ENCODE measurements at regions of chr2 and their contacts with region 1.

Region 1: DNA sequence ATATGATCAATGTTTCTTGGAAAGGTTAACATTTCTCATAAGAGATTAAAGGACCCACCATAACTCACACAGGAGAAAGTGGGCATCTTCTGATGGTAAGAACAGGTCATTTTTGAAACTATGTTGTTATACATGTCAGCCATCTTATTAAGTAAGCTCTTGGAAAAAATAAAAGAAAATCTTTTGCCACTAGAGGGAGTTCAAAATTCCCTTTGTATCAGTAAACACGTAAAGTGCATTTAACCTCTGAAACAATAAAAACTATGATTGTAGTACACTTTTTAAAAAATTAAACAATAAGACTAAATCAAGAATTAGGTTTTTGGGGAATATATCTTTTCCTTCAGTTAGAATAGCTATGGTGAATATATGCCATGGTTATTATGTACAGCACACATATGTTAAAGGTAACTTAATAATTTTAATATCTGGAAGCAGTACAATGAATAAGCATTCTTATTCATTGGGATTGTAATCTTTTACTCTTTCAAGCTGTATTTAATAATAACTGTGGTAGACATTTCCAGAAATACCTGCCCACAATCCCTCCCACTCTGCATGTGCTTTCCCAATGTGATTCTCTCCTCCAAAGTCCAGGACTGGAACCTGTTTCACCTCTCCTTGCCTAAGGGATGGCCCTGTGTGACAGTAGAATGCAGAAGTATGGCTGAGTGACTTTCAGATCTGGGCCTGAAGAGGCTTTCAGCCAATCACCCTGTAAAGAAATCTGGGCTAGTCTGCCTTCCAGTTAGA is 64.2 kb downstream of the RBMS1 start:
- DNase-seq: peak; percentile 62
- H3K4me3 Mint-ChIP-seq: no peak overlapping the region
- H3K27ac Mint-ChIP-seq: peak overlapping the region; percentile 93
- H3K4me1 Mint-ChIP-seq: peaks cover 24% of the 10 kb centered on the region
- H3K27me3 Mint-ChIP-seq: no peaks in the 10 kb centered on the region
- CTCF ChIP-seq: peak; percentile 32

Region 2: GRCh38 chr2:160028431-160029269 is 400.8 kb before region 1 on chr2:
- CTCF ChIA-PET with region 1: no interaction called
- POLR2A ChIA-PET with region 1: no interaction called
- intact Hi-C with region 1: no loop called
- DNase-seq: peak; percentile 14
- H3K4me3 Mint-ChIP-seq: no peak overlapping the region
- H3K27ac Mint-ChIP-seq: no peak overlapping the region
- H3K4me1 Mint-ChIP-seq: peaks cover 23% of the 10 kb centered on the region
- H3K27me3 Mint-ChIP-seq: no peaks in the 10 kb centered on the region
- CTCF ChIP-seq: no peak

Region 3: GRCh38 chr2:160282063-160282580 is 147.3 kb before region 1 on chr2:
- CTCF ChIA-PET with region 1: no interaction called
- POLR2A ChIA-PET with region 1: no interaction called
- intact Hi-C with region 1: no loop called
- DNase-seq: no peak
- H3K4me3 Mint-ChIP-seq: no peak overlapping the region
- H3K27ac Mint-ChIP-seq: no peak overlapping the region
- H3K4me1 Mint-ChIP-seq: peaks cover 15% of the 10 kb centered on the region
- H3K27me3 Mint-ChIP-seq: no peaks in the 10 kb centered on the region
- CTCF ChIP-seq: no peak

Region 4: DNA sequence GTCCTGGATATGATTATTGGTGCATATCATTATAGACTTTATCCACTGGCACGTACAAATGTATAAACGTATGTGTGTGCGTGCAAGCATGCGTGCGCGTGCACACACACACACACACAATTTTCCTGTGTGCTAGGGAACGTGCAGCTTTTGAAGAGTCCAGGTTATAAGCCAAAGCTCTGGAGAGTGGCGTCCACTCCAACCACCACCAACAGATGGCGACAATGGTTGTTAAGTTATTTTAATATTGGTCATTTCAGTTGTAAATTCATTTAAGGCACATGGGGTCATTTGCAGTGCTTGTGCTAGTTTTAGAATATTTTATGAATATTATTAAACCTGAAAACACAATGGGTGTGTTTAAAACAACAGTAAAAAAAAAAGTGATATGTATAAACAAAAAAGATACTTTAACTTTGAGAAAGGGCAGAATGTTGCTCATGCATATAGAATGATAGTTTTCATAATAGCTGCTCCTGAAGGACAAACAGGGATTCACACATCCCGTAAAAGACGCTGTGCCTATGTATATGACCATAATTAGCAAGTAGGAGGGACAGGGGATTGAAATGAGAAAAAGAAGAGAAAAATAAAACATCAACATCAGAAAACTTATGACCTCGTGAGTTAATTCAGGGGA is 105.1 kb before region 1 on chr2:
- CTCF ChIA-PET with region 1: interaction called, 46 read pairs
- POLR2A ChIA-PET with region 1: interaction called, 3 read pairs
- intact Hi-C with region 1: loop called (anchors 1 kb)
- DNase-seq: peak; percentile 66
- H3K4me3 Mint-ChIP-seq: no peak overlapping the region
- H3K27ac Mint-ChIP-seq: peak overlapping the region; percentile 36
- H3K4me1 Mint-ChIP-seq: peaks cover 30% of the 10 kb centered on the region
- H3K27me3 Mint-ChIP-seq: no peaks in the 10 kb centered on the region
- CTCF ChIP-seq: peak; percentile 71

Region 5: GRCh38 chr2:160406591-160407392 is 22.6 kb before region 1 on chr2:
- CTCF ChIA-PET with region 1: interaction called, 6 read pairs
- POLR2A ChIA-PET with region 1: interaction called, 38 read pairs
- intact Hi-C with region 1: no loop called
- DNase-seq: peak; percentile 73
- H3K4me3 Mint-ChIP-seq: peak overlapping the region; percentile 92
- H3K27ac Mint-ChIP-seq: peak overlapping the region; percentile 85
- H3K4me1 Mint-ChIP-seq: peaks cover 39% of the 10 kb centered on the region
- H3K27me3 Mint-ChIP-seq: no peaks in the 10 kb centered on the region
- CTCF ChIP-seq: no peak

Region 6: GRCh38 chr2:160493227-160494028 is 64.0 kb after region 1 on chr2 and contains the start of gene RBMS1:
- CTCF ChIA-PET with region 1: interaction called, 3 read pairs
- POLR2A ChIA-PET with region 1: no interaction called
- intact Hi-C with region 1: loop called (anchors 1 kb)
- DNase-seq: peak; percentile 57
- H3K4me3 Mint-ChIP-seq: peak within 1 kb of the TSS; percentile 82
- H3K27ac Mint-ChIP-seq: peak within 1 kb of the TSS; percentile 83
- H3K4me1 Mint-ChIP-seq: peaks cover 12% of the 10 kb centered on the region
- H3K27me3 Mint-ChIP-seq: peaks cover 12% of the 10 kb centered on the region
- CTCF ChIP-seq: no peak
- total RNA-seq, gene RBMS1: 65.4 and 66.8 TPM in 2 replicates

Region 7: GRCh38 chr2:160666154-160667060 is 237.0 kb after region 1 on chr2:
- CTCF ChIA-PET with region 1: no interaction called
- POLR2A ChIA-PET with region 1: no interaction called
- intact Hi-C with region 1: loop called (anchors 5 kb)
- DNase-seq: peak; percentile 95
- H3K4me3 Mint-ChIP-seq: peak overlapping the region; percentile 36
- H3K27ac Mint-ChIP-seq: peak overlapping the region; percentile 6
- H3K4me1 Mint-ChIP-seq: peaks cover 35% of the 10 kb centered on the region
- H3K27me3 Mint-ChIP-seq: no peaks in the 10 kb centered on the region
- CTCF ChIP-seq: no peak

Region 8: DNA sequence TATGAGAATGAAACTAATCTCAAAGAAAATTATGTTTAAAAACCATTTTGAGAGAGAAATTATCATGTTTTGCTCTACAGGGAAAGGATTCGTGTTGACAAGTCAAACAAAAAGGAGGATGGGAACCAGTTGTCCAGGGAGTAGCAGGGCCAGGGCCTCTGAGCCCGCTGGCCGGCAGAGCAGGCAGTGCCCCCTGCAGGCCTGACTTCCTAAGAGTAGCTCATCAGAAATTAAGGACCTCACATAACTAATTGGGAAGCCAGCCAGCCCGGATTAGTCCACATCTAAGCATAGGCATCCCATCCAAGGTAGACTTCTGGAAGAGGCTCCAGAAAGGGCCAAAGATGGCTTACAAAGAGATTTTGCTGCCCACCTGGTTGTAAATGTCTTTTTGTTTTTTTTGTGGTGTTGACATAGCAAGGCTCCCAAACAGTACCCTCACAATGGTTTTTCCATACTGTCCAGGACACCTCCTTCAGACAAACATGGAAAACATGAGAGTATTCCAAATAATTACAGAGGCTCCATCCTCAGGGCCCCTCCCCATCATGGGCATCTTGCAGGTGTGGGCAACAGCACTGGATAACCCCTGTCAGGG is 489.6 kb after region 1 on chr2:
- CTCF ChIA-PET with region 1: interaction called, 6 read pairs
- POLR2A ChIA-PET with region 1: no interaction called
- intact Hi-C with region 1: loop called (anchors 1 kb)
- DNase-seq: peak; percentile 79
- H3K4me3 Mint-ChIP-seq: no peak overlapping the region
- H3K27ac Mint-ChIP-seq: no peak overlapping the region
- H3K4me1 Mint-ChIP-seq: no peaks in the 10 kb centered on the region
- H3K27me3 Mint-ChIP-seq: no peaks in the 10 kb centered on the region
- CTCF ChIP-seq: peak; percentile 71

Measured in MCF 10A (cell line).